Adrenal gland (tissue), 19 donors: ENCODE measurements at regions of chr6 and their contacts with region 1.

Region 1: DNA sequence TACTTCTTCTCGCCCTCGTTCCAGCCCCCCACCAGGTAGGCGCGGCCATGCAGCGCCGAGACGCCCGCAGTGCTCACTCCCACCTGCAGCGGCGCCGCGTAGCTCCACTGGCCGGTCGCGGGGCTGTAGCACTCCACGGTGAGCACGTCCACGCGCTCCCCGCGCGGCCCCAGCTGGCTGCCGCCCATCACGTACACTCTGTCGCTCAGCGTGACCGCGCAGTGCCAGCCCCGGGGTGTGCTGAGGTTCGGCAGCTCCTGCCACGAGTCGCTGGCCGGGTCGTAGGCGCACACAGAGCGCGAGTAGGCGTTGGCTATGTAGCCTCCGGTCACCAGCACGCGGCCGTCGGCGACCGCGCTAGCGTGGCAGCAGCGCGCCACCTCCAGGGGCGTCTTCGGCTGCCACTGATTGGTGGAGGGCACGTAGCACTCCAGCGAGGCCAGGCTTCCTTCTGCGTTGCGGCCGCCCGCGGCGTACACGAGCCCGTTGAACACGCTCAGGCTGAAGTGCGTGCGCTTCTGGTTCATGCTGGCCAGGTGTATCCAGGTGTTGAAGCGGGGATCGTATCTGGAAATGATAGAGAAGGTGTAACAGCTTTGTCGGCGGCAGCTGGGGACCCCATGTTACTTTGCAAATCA is 13.7 kb downstream of the KLHL31 start:
- DNase-seq: peak; percentile 76 to 89 (median 85)
- H3K4me3 ChIP-seq: peak overlapping the region in 3 of 4 donors; percentile 32 to 54 (median 51)
- H3K27ac ChIP-seq: peak overlapping the region in 3 of 5 donors; percentile 69 to 84 (median 73)
- H3K4me1 ChIP-seq: peaks cover 0 to 11% of the 10 kb centered on the region in 2 donors
- H3K27me3 ChIP-seq: no peaks in the 10 kb centered on the region
- CTCF ChIP-seq: peak in 5 of 6 experiments; percentile 28 to 47 (median 31)
- POLR2A ChIP-seq: peak in 1 of 2 donors; percentile 66

Region 2: GRCh38 chr6:53544470-53545308 is 107.2 kb before region 1 on chr6 and contains the start of gene GCLC:
- intact Hi-C with region 1: loop called (anchors 5 kb)
- DNase-seq: peak; percentile 93 to 97 (median 96)
- H3K4me3 ChIP-seq: peak within 1 kb of the TSS; percentile 45 to 90 (median 62)
- H3K27ac ChIP-seq: peak within 1 kb of the TSS; percentile 92 to 98 (median 95)
- H3K4me1 ChIP-seq: peaks cover 0 to 41% of the 10 kb centered on the region in 2 donors
- H3K27me3 ChIP-seq: no peaks in the 10 kb centered on the region
- CTCF ChIP-seq: peak; percentile 18 to 78 (median 60)
- POLR2A ChIP-seq: peak; percentile 97 to 98
- total RNA-seq, gene GCLC: 26.5 to 65.6 (median 39.8) TPM

Region 3: GRCh38 chr6:53725791-53726431 is 74.0 kb after region 1 on chr6:
- intact Hi-C with region 1: loop called in 1 of 2 experiments (anchors 10 kb)
- DNase-seq: peak; percentile 62 to 87 (median 81)
- H3K4me3 ChIP-seq: no peak overlapping the region
- H3K27ac ChIP-seq: no peak overlapping the region
- H3K4me1 ChIP-seq: no peaks in the 10 kb centered on the region
- H3K27me3 ChIP-seq: no peaks in the 10 kb centered on the region
- CTCF ChIP-seq: peak; percentile 83 to 98 (median 89)
- POLR2A ChIP-seq: no peak